ENCODE measurements at regions of chr14 and their contacts with region 1.

Region 1: DNA sequence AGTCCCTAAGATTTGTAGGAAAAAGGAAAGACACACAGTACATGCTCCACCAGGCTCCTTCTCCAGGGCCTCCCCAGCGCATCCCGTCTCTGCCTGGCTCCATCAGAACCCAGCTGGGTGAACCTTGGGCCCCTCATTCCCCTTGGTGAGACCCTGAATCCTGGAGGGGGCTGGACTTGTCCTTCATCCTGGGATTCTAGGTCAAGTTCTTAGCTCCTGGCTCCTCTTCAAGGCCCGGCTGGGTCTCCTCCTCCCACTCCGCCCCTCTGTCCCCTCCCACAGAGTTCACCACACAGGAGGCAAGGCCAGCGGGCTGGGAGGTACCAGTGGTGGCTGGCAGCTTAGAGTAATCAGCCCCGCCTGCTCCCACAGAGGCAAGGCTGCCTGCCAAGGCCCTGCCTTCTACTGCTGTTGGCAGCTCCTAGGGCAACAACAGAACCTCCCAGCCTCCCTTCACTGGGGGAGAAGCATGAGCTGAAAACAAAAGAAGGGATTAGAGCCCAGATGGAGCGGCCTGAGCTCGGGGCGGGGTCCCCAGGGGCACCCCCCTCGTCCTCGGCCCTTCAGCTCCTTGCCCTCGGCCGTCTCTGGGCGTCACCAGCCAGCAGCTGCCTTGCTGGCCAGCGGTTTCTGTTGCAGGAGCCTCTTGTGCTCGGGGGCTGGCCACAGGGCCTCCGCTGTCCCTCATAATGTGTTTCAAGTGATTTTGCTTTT is 49.4 kb downstream of the PSMA6 start:
- DNase-seq: peak; percentile 99
- H3K4me3 ChIP-seq: peak overlapping the region in 1 of 2 donors; percentile 11
- H3K27ac ChIP-seq: peak overlapping the region; percentile 94 to 95
- H3K4me1 ChIP-seq: peaks cover 17% of the 10 kb centered on the region
- H3K27me3 ChIP-seq: no peaks in the 10 kb centered on the region
- CTCF ChIP-seq: peak in 1 of 4 experiments; percentile 1
- POLR2A ChIP-seq: peak; percentile 77

Region 2: DNA sequence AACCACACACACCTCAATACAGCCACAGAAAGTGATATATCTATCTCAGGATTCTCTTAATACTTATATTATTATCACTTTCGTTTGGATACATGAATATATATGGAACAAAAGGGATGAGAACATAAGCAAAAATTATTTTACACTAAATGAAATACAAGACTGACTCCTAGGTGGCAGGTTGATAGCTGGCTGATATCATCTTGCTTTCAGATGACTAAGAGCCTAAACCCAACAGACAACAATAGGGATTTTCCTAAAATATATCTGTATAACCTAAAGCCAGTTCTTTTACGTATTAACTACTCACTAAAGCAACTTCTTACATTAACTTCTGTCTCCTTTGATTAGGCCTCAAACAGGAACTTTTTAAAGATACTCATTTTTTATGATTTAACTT is 531.6 kb before region 1 on chr14:
- intact Hi-C with region 1: no loop called
- DNase-seq: no peak
- H3K4me3 ChIP-seq: no peak overlapping the region
- H3K27ac ChIP-seq: no peak overlapping the region
- H3K4me1 ChIP-seq: no peaks in the 10 kb centered on the region
- H3K27me3 ChIP-seq: no peaks in the 10 kb centered on the region
- CTCF ChIP-seq: no peak
- POLR2A ChIP-seq: no peak

Region 3: DNA sequence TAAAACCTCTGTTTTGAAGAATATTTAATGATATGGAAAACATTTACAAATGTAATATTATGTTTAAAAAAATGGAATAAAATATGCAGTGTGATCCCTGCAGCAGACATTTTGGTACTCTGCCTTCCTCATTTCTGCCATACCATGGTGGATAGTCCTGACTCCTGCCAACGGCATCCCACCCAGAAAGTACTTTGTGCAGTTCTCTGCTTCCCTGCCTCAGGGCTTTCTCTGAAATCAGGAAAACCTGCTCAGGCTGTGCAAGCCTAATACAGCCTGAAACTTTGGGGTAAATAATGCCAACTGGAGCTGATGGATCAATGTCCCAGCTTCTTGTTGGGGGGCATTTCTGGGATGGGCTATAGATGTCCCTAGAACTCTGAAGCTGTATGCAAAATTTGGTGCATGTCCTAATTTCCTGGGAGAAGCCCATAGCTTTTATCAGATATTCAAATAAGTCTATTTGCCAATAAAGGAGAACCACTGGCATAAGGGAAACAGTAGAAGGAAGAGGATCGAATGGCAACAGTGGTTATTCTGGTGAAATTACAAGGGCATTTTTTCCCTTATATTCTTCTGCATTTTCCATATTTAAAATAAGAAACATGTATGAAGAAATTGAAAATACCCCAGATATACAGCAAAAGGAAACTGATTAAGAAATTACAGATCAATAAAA is 15.4 kb before region 1 on chr14:
- intact Hi-C with region 1: no loop called
- DNase-seq: no peak
- H3K4me3 ChIP-seq: no peak overlapping the region
- H3K27ac ChIP-seq: no peak overlapping the region
- H3K4me1 ChIP-seq: no peaks in the 10 kb centered on the region
- H3K27me3 ChIP-seq: no peaks in the 10 kb centered on the region
- CTCF ChIP-seq: no peak
- POLR2A ChIP-seq: no peak

Region 4: GRCh38 chr14:35385042-35385839 is 43.6 kb after region 1 on chr14:
- intact Hi-C with region 1: loop called (anchors 5 kb)
- DNase-seq: peak; percentile 72
- H3K4me3 ChIP-seq: no peak overlapping the region
- H3K27ac ChIP-seq: peak overlapping the region; percentile 63 to 67
- H3K4me1 ChIP-seq: peaks cover 5% of the 10 kb centered on the region
- H3K27me3 ChIP-seq: no peaks in the 10 kb centered on the region
- CTCF ChIP-seq: no peak
- POLR2A ChIP-seq: no peak